GM10248 (cell line): ENCODE measurements at regions of chr16 and their contacts with region 1.

Region 1: DNA sequence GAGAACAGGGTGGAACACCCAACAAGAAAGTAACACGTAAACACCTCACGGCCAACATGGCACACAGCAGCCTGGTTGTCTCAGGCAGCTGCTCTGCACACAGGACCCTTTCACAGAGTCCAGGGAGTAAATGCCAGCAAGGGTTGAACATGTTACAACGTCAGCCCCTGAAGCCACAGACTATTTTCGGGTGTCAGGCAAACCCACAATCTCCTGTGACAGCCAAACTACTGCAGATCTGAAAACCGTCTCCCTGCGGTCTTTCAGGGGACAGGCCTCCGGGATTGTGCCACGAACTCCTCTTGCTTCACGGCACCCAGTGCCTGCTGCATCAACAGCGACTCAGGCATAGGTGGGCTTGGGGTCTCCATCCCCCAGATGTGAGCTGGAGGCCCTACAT is 127.7 kb downstream of the XYLT1 start:
- DNase-seq: peak; percentile 54
- CTCF ChIP-seq: no peak

Region 2: GRCh38 chr16:17184026-17184425 is 159.0 kb before region 1 on chr16:
- CTCF ChIA-PET with region 1: no interaction called
- POLR2A ChIA-PET with region 1: no interaction called
- DNase-seq: no peak
- CTCF ChIP-seq: no peak

Region 3: GRCh38 chr16:17266608-17267313 is 76.3 kb before region 1 on chr16:
- CTCF ChIA-PET with region 1: no interaction called
- POLR2A ChIA-PET with region 1: no interaction called
- DNase-seq: no peak
- CTCF ChIP-seq: no peak

Region 4: GRCh38 chr16:17277977-17278381 is 65.0 kb before region 1 on chr16:
- CTCF ChIA-PET with region 1: interaction called, 12 read pairs
- POLR2A ChIA-PET with region 1: no interaction called
- DNase-seq: peak; percentile 48
- CTCF ChIP-seq: peak; percentile 73

Region 5: GRCh38 chr16:17301593-17302135 is 41.4 kb before region 1 on chr16:
- CTCF ChIA-PET with region 1: interaction called, 14 read pairs
- POLR2A ChIA-PET with region 1: interaction called, 4 read pairs
- DNase-seq: peak; percentile 72
- CTCF ChIP-seq: no peak

Region 6: DNA sequence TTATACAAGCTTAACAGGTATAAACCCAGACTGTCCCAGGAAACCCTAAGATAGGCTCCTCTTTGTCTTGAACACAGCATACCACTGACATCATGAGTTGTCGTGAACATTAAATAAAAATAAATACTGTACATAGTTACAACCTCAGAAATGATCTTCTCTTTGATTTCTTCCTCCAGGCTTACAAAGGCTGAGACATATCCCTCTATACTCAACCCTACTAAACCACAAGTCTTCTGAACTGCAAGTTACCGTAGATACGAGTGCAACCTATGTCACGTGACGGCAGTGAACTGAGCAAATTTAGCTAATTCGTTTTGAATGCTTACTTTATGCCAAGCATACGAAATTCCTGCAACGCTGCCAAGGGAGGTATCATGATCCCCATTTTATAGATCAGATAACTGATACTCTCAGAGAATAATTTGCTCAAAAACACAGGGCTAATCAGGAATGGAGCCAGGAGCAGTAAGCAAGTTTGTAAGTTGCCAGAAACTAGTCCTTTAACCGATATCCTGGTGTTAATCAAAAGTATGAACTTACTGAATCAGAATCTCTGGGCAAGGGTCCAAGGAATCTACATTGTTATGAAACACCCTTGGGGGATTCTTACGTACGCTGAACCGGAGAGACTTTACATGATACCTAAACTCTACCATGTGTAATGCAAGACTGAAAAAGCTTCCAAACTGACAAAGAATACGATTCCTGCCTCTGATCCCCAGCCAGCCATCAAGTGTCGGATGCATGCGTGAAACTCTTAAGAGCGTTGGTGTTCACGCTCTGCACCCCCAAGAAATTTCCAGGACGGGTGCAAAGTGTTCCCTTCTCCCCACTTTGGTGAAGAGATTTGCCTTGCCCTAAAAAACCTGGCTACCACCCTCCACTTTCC is 21.5 kb after region 1 on chr16:
- CTCF ChIA-PET with region 1: interaction called, 28 read pairs
- POLR2A ChIA-PET with region 1: interaction called, 3 read pairs
- DNase-seq: no peak
- CTCF ChIP-seq: no peak

Region 7: GRCh38 chr16:17369421-17370222 is 26.6 kb after region 1 on chr16:
- CTCF ChIA-PET with region 1: interaction called, 28 read pairs
- POLR2A ChIA-PET with region 1: interaction called, 4 read pairs
- DNase-seq: peak; percentile 65
- CTCF ChIP-seq: no peak

Region 8: GRCh38 chr16:17416461-17417311 is 73.7 kb after region 1 on chr16:
- CTCF ChIA-PET with region 1: interaction called, 21 read pairs
- POLR2A ChIA-PET with region 1: interaction called, 3 read pairs
- DNase-seq: peak; percentile 89
- CTCF ChIP-seq: peak; percentile 8

Region 9: DNA sequence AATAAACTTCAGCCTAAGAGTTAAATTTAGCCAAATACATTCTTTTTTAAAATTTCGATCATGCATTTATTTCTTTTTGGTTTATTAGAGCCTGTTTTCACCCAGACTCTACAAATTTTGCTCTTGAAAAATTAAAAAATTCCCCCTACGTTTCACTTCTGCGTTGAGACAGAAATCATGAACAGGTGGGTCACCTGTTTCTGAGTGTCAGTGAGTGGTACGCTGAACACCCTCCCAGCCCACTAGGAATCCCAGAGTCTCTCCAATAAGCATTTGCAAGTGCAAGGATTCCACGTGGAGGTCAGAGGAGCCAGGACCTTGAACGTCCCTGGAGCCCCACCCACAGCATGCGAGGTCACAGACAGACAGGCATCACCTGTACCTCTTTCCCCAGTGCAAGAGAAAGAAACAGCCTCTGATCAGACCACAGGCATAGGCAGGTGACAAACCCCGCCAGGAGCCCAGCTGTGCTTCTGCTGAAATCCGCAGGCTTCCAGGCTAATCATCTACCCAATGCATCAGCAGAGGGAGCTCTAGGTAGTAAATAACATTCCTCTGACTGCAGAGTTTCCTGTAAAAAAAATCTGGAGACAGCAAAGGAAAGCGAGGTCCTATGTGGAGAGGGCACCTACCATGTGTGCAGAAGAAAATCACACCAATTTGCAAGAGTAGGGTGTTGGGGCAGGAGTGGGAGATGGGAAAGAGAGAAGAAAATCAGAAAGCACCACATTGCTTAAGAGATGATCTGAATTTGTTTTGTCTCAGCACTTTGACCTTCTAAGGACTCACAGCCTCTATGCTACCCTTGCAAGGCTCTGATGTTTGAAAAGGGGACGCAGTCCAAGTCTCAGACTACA is 133.6 kb after region 1 on chr16:
- CTCF ChIA-PET with region 1: no interaction called
- POLR2A ChIA-PET with region 1: no interaction called
- DNase-seq: peak; percentile 67
- CTCF ChIP-seq: peak; percentile 54